Activated CD8-positive, alpha-beta T cell treated with anti-CD3 and anti-CD28 coated beads, Interleukin-2, amount 10 ng/mL, durations not matched to agents 7 days and 5 days (primary cell): ENCODE measurements at regions of chr16 and their contacts with region 1.

Region 1: GRCh38 chr16:52191531-52192134 is 355.3 kb downstream of the TOX3 start:
- DNase-seq: peak; percentile 64
- ATAC-seq: no peak
- H3K4me3 Mint-ChIP-seq: no peak overlapping the region
- H3K27ac Mint-ChIP-seq: no peak overlapping the region
- H3K4me1 Mint-ChIP-seq: no peaks in the 10 kb centered on the region
- H3K27me3 Mint-ChIP-seq: no peaks in the 10 kb centered on the region

Region 2: DNA sequence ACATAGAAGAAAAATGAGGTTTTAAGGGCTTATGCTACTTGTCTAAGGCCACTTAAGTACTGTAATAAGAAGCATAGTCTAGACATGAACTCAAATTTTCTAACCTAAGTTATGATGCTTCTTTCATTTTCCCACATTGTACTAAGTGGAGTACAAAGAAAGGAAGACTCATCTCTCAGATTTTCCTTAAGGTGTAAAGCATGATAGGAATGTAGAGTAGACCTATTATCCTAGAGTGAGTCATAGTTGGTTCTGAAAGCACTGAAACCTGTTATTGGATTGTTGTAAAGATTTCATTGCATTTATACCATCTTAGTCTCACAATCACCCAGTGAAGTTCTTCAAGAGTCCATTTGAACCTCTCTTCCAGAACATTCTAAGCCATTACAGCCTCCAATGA is 11.5 kb after region 1 on chr16:
- CTCF ChIA-PET with region 1: interaction called, 17 read pairs
- POLR2A ChIA-PET with region 1: no interaction called
- DNase-seq: no peak
- ATAC-seq: no peak
- H3K4me3 Mint-ChIP-seq: no peak overlapping the region
- H3K27ac Mint-ChIP-seq: no peak overlapping the region
- H3K4me1 Mint-ChIP-seq: no peaks in the 10 kb centered on the region
- H3K27me3 Mint-ChIP-seq: no peaks in the 10 kb centered on the region

Region 3: DNA sequence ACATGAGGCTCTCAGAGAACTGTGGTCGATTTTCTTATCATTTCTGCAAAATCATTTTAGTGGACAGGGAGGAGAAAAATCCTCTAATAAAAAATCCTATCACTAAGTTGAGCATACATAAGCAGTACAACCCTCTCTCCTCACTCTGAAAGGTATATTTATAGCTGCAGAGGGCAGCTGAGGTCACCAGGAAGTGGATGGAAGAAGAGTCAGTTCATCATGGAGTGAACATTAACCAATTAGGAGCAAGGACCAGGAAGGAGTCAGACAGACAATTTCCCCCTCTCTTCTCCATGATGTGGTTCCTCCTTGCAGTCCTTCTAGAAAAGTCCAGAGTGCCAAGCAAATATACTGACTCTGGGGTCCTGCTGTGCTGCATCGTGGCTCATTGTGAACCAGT is 101.6 kb after region 1 on chr16:
- CTCF ChIA-PET with region 1: no interaction called
- POLR2A ChIA-PET with region 1: no interaction called
- DNase-seq: no peak
- ATAC-seq: no peak
- H3K4me3 Mint-ChIP-seq: no peak overlapping the region
- H3K27ac Mint-ChIP-seq: no peak overlapping the region
- H3K4me1 Mint-ChIP-seq: no peaks in the 10 kb centered on the region
- H3K27me3 Mint-ChIP-seq: no peaks in the 10 kb centered on the region

Region 4: DNA sequence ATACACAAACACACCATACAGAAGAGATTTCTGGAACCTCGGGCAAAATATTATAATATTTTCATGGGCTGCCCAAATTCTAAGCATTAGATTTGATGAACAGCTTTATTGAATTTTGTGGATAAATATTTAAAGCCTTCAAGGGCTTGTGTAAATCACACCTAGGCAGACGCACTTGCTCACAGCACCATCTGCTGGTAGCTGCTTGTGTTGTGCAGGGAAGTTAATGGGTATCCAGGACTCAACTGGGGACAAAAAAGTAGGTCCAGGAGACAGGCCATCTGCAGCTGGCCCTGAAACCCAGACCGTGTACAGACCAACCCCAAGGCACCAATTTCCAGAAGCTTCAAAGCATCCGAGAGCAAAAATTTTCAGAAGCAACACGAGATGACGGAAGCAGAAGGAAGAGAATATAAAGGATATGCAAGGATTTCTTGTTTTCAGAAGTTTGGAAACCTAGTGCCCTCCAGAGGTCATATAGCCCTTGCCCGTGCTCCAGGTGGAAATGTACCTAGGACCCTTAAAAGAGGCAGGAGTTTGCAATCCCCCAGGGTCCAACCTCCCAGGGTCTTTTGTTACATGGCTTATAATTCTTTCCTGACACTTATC is 721.0 kb after region 1 on chr16:
- CTCF ChIA-PET with region 1: interaction called, 12 read pairs
- POLR2A ChIA-PET with region 1: no interaction called
- DNase-seq: peak; percentile 50
- ATAC-seq: no peak
- H3K4me3 Mint-ChIP-seq: no peak overlapping the region
- H3K27ac Mint-ChIP-seq: no peak overlapping the region
- H3K4me1 Mint-ChIP-seq: no peaks in the 10 kb centered on the region
- H3K27me3 Mint-ChIP-seq: no peaks in the 10 kb centered on the region